Heart left ventricle (tissue), 16 donors: ENCODE measurements at regions of chr11 and their contacts with region 1.

Region 1: DNA sequence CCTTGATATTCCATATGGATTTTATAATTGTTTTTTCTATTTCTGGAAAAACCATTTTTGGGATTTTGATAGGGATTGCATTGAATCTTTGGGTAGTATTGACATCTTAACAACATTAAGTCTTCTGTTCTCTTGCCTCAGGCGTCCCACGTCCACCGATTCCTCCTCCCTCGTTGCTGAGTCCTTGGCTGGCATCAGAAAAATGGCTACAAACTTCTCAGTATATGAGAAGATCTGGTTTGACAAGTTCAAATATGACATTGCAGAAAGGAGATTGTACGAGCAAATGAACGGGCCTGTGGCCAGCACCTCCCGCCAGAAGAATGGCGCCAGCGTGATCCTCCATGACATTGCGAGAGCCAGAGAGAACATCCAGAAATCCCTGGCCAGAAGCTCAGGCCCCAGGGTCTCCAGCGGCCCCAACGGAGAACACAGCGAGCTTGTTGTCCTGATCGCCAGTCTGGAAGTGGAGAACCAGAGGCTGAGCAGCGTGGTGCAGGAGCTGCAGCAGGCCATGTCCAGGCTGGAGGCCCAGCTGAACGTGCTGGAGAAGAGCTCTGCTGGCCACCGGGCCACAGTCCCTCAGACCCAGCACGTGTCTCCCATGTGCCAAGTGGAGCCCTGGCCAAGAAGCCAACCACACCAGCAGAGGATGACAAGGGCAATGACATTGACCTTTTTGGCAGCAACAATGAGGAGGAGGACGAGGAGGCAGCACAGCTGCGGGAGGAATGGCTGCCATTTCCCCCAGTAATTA is 20.7 kb upstream of the SCGB1D1 start:
- DNase-seq: peak in 3 of 5 donors; percentile 24 to 59 (median 52)
- ATAC-seq: peak in 3 of 4 donors; percentile 55 to 60 (median 59)
- H3K4me3 ChIP-seq: no peak overlapping the region
- H3K27ac ChIP-seq: peak overlapping the region in 7 of 12 donors; percentile 12 to 72 (median 48)
- H3K4me1 ChIP-seq: peaks cover 0 to 19% (median 0%) of the 10 kb centered on the region in 12 donors
- H3K27me3 ChIP-seq: peaks cover 0 to 16% (median 3%) of the 10 kb centered on the region in 9 donors
- CTCF ChIP-seq: no peak
- POLR2A ChIP-seq: no peak

Region 2: GRCh38 chr11:61718621-61719302 is 450.5 kb before region 1 on chr11:
- intact Hi-C with region 1: no loop called
- DNase-seq: peak in 3 of 5 donors; percentile 63 to 71 (median 67)
- ATAC-seq: peak; percentile 27 to 87 (median 68)
- H3K4me3 ChIP-seq: peak overlapping the region; percentile 7 to 62 (median 45)
- H3K27ac ChIP-seq: peak overlapping the region in 9 of 12 donors; percentile 24 to 75 (median 42)
- H3K4me1 ChIP-seq: peaks cover 0 to 47% (median 15%) of the 10 kb centered on the region in 12 donors
- H3K27me3 ChIP-seq: no peaks in the 10 kb centered on the region
- CTCF ChIP-seq: no peak
- POLR2A ChIP-seq: no peak

Region 3: DNA sequence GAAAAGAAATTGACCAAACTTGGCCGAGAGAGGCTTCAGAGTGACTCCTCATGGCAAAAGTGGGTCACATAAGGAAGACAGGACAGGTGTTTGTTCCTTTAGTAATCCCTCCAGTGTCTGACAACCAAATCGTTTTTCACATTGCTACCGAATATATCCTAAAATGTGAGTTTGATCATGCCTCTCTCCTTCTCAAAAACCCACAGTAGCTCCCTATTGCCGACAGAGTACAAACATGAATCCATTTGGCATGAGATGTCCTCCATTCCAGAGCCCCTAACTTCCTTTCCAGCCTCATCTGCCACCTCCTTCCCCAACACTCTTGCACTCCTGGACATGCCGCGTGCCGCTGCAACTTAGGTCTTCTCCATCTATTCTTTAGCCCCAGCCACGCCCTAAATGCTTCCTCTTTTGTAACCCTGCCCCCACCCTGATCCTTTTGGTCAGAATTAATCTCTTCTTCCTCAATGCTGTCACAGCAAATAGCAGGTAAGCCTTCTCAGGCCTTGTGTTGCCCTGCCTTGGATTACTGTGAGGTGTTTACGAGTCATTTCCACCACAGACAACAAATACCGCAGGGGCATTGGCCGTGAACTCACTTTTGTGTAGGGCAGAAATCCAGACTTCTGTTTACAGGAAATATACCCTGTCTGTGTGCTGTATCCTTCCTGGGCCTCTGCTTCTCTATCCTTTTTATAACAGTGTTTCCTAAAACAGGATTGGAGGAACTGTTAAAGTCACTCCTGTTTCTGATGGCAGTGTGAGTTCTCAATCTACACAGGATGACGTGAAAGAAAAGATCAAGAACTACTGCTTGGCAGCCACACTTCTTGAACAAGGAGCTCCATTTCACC is 135.9 kb before region 1 on chr11:
- intact Hi-C with region 1: no loop called
- DNase-seq: no peak
- ATAC-seq: no peak
- H3K4me3 ChIP-seq: no peak overlapping the region
- H3K27ac ChIP-seq: peak overlapping the region in 1 of 12 donors; percentile 51
- H3K4me1 ChIP-seq: peaks cover 0 to 7% (median 0%) of the 10 kb centered on the region in 12 donors
- H3K27me3 ChIP-seq: no peaks in the 10 kb centered on the region
- CTCF ChIP-seq: no peak
- POLR2A ChIP-seq: no peak

Region 4: GRCh38 chr11:62273789-62274275 is 104.6 kb after region 1 on chr11:
- intact Hi-C with region 1: no loop called
- DNase-seq: no peak
- ATAC-seq: no peak
- H3K4me3 ChIP-seq: no peak overlapping the region
- H3K27ac ChIP-seq: no peak overlapping the region
- H3K4me1 ChIP-seq: no peaks in the 10 kb centered on the region
- H3K27me3 ChIP-seq: peaks cover 0 to 11% (median 0%) of the 10 kb centered on the region in 9 donors
- CTCF ChIP-seq: no peak
- POLR2A ChIP-seq: no peak

Region 5: DNA sequence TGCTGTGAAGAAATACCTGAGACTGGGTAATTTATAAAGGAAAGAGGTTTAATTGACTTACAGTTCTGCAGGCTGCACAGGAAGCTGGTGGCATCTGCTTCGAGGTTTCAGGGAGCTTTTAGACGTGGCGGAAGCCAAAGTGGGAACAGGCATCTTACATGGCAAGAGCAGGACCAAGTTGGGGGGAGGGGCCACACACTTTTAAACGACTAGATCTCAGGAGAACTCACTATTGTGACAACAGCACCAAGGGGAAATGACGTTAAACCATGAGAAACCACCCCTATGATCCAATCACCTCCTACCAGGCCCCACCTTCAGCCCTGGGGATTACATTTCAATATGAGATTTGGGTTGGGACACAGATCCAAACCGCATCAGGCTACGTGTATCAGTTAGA is 140.7 kb after region 1 on chr11:
- intact Hi-C with region 1: loop called (anchors 1 to 5 kb)
- DNase-seq: no peak
- ATAC-seq: no peak
- H3K4me3 ChIP-seq: no peak overlapping the region
- H3K27ac ChIP-seq: no peak overlapping the region
- H3K4me1 ChIP-seq: peaks cover 0 to 10% (median 0%) of the 10 kb centered on the region in 12 donors
- H3K27me3 ChIP-seq: peaks cover 0 to 62% (median 0%) of the 10 kb centered on the region in 9 donors
- CTCF ChIP-seq: no peak
- POLR2A ChIP-seq: no peak

Region 6: GRCh38 chr11:62315431-62315830 is 146.2 kb after region 1 on chr11:
- intact Hi-C with region 1: loop called (anchors 1 to 5 kb)
- DNase-seq: no peak
- ATAC-seq: no peak
- H3K4me3 ChIP-seq: no peak overlapping the region
- H3K27ac ChIP-seq: no peak overlapping the region
- H3K4me1 ChIP-seq: peaks cover 0 to 18% (median 0%) of the 10 kb centered on the region in 12 donors
- H3K27me3 ChIP-seq: peaks cover 0 to 30% (median 0%) of the 10 kb centered on the region in 9 donors
- CTCF ChIP-seq: no peak
- POLR2A ChIP-seq: no peak

Region 7: DNA sequence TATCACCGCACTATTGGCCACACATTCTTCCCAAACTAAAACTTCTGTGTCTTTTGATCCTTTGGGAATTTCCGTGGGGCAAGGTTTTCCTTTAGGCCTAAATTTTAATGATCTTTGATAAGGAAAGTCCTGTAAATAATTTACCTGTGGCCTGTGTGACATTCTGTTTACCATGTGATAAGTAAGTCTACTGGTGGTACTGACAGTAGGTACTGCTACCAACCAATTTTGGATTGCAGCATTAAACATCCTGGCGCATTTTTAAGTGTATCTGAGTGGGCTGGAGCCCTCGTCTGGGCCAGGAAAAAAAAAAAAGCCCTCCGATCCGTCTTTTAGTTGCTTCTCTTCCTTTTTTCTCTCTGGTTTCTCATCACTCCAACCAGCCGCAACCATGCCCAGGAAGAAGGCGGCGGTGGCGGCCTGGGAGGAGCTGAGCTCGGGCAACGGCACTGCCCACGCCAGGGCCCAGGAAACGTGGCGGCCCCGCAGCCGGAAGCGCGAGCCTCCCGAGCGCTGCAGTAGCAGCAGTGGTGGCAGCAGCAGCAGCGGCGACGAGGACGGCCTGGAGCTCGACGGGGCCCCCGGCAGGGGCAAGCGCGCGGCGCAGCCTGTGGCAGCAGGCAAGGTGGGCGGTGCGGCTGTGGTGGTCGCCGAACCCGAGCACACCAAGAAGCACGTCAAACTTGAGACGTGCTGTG is 201.6 kb after region 1 on chr11:
- intact Hi-C with region 1: loop called in 4 of 10 experiments (anchors 5 to 10 kb)
- DNase-seq: peak in 2 of 5 donors; percentile 45 to 57
- ATAC-seq: peak in 1 of 4 donors; percentile 22
- H3K4me3 ChIP-seq: peak overlapping the region in 1 of 12 donors; percentile 43
- H3K27ac ChIP-seq: peak overlapping the region in 1 of 12 donors; percentile 70
- H3K4me1 ChIP-seq: no peaks in the 10 kb centered on the region
- H3K27me3 ChIP-seq: no peaks in the 10 kb centered on the region
- CTCF ChIP-seq: no peak
- POLR2A ChIP-seq: no peak